Activated CD4-positive, alpha-beta T cell treated with anti-CD3 and anti-CD28 coated beads, Interleukin-2, amount 10 ng/mL, durations not matched to agents 24 days and 14 days (primary cell): ENCODE measurements at regions of chr18 and their contacts with region 1.

Region 1: GRCh38 chr18:62556397-62556796 is 33.6 kb downstream of the ZCCHC2 start:
- DNase-seq: no peak
- H3K4me3 Mint-ChIP-seq: no peak overlapping the region
- H3K27ac Mint-ChIP-seq: no peak overlapping the region
- H3K4me1 Mint-ChIP-seq: peaks cover 20% of the 10 kb centered on the region
- H3K27me3 Mint-ChIP-seq: no peaks in the 10 kb centered on the region

Region 2: GRCh38 chr18:62452280-62452831 is 104.0 kb before region 1 on chr18:
- intact Hi-C with region 1: no loop called
- DNase-seq: peak; percentile 60
- H3K4me3 Mint-ChIP-seq: peak overlapping the region; percentile 67
- H3K27ac Mint-ChIP-seq: peak overlapping the region; percentile 78
- H3K4me1 Mint-ChIP-seq: peaks cover 23% of the 10 kb centered on the region
- H3K27me3 Mint-ChIP-seq: no peaks in the 10 kb centered on the region

Region 3: GRCh38 chr18:62571648-62572047 is 15.3 kb after region 1 on chr18:
- intact Hi-C with region 1: loop called (anchors 2 kb)
- DNase-seq: no peak
- H3K4me3 Mint-ChIP-seq: no peak overlapping the region
- H3K27ac Mint-ChIP-seq: peak overlapping the region; percentile 57
- H3K4me1 Mint-ChIP-seq: peaks cover 21% of the 10 kb centered on the region
- H3K27me3 Mint-ChIP-seq: no peaks in the 10 kb centered on the region